Panc1 (cell line): ENCODE measurements at regions of chr19 and their contacts with region 1.

Region 1: GRCh38 chr19:9435279-9436268 is at the start of gene ZNF266:
- DNase-seq: peak; percentile 70
- ATAC-seq: peak; percentile 98
- H3K4me3 ChIP-seq: peak within 1 kb of the TSS; percentile 80 to 86
- H3K27ac ChIP-seq: peak within 1 kb of the TSS; percentile 87
- H3K4me1 ChIP-seq: peaks cover 6% of the 10 kb centered on the region; the same call in 1 of the 2 replicates
- H3K27me3 ChIP-seq: no peaks in the 10 kb centered on the region
- CTCF ChIP-seq: peak; percentile 51
- total RNA-seq, gene ZNF266: 10.5 TPM

Region 2: DNA sequence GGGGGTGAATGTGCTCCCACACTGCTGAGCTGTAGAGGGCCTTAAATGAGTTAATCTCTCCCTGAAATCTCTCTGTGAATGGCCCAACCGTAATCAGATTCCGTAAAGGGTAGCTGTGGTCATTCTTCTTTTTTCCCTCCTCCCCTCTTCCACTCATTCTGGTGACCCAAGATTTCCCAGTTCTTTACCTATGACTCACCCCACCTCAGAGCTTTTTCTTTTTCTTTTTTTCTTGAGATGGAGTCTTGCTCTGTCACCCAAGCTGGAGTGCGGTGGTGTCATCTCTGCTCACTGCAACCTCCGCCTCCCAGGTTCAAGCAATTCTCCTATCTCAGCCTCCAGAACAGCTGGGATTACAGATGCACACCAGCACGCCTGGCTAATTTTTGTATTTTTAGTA is 392.0 kb before region 1 on chr19:
- CTCF ChIA-PET with region 1: no interaction called
- POLR2A ChIA-PET with region 1: no interaction called
- in situ Hi-C with region 1: no loop called
- intact Hi-C with region 1: no loop called
- DNase-seq: no peak
- ATAC-seq: no peak
- H3K4me3 ChIP-seq: no peak overlapping the region
- H3K27ac ChIP-seq: no peak overlapping the region
- H3K4me1 ChIP-seq: no peaks in the 10 kb centered on the region
- H3K27me3 ChIP-seq: no peaks in the 10 kb centered on the region
- CTCF ChIP-seq: no peak

Region 3: DNA sequence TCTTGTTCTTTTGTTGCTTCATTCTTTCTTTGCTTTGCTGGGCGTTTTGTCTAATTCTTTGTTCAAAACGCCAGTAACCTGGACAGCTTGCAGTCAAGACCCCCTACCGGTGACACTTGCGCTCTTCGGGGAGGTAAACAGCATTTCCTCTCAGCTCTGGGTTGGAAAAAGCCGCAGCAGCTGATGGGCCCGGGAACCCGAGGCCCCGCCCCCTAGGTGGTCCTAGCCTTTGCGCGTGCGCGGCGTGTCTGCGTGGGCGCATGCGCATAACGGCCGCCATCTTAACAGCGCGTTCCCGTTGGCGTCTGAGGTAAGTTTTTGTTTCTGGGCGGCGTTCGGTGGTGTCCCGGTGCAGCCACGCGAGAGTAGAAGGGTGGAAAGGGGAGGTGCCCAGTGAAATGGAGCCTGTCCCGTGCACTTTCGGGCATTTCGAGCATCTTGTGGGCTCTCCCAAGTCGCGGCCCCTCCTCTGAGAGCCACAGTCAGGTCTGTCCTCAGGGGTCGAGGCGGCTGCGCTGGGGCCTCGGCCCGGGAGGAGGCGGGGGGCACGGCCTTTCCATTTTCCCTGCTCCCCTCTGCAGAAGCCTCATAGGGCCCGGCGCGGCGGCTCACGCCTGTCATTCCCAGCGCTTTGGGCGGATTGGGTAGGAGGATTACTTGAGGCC is 111.5 kb before region 1 on chr19 and contains the start of gene ZNF559:
- CTCF ChIA-PET with region 1: no interaction called
- POLR2A ChIA-PET with region 1: no interaction called
- in situ Hi-C with region 1: no loop called
- intact Hi-C with region 1: loop called (anchors 10 kb)
- DNase-seq: peak; percentile 70
- ATAC-seq: peak; percentile 98
- H3K4me3 ChIP-seq: peak within 1 kb of the TSS; percentile 71 to 83
- H3K27ac ChIP-seq: peak within 1 kb of the TSS; percentile 87
- H3K4me1 ChIP-seq: no peaks in the 10 kb centered on the region
- H3K27me3 ChIP-seq: no peaks in the 10 kb centered on the region
- CTCF ChIP-seq: no peak; the same call in 1 of the 2 replicates
- total RNA-seq, gene ZNF559: 8.1 TPM